A673 (cell line): ENCODE measurements at regions of chr11 and their contacts with region 1.

Region 1: GRCh38 chr11:63445720-63446119 is 45.2 kb downstream of the PLAAT5 start:
- DNase-seq: no peak
- H3K4me3 ChIP-seq: no peak overlapping the region
- H3K27ac ChIP-seq: no peak overlapping the region
- H3K4me1 ChIP-seq: no peaks in the 10 kb centered on the region
- H3K27me3 ChIP-seq: peaks cover 12% of the 10 kb centered on the region
- CTCF ChIP-seq: no peak

Region 2: DNA sequence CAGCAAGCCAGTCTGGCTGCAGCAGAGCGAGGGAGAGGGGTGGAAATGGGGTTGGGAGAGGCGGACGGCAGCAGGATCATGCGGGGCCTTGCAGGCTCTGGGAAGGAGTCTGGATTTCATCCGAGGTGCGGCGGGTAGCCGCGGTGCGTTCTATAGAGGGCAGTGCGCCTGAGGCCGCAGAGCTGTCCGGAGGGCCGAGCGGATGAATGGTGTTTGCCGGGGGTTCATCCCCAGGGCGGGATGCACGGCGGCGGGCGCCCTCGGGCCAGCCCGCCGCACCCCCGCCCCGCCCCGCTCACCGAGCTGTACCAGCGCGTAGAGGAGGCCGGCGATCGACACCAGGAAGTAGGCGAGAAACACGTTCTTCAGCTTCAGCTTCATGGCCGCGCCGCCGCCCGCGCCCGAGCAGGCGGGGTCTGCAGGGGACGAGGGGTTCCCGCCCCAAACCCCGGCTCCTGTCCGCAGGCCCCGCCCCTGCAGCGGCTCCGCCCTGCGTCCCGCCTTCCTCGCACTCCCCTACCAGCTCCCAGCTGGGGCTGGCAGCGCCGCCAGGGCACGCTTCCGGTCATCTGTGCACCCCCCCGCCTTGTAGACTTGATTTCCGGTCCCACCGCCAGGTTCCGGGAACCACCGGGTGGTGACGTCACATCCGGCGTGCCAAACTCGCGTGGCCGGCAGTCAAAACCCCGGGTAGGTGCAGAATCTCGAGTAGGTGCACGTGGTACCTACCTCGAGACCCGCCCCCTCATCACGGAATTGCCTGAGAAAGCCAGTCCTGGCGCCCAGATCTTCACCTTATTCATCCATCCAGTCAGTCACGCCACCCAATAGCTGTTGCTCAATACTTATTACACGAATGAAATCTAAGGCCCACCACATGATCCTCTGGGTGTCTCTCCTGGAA is 823.9 kb before region 1 on chr11 and contains the start of gene B3GAT3:
- CTCF ChIA-PET with region 1: no interaction called
- POLR2A ChIA-PET with region 1: no interaction called
- intact Hi-C with region 1: no loop called
- DNase-seq: peak; percentile 97
- H3K4me3 ChIP-seq: peak within 1 kb of the TSS; percentile 57
- H3K27ac ChIP-seq: peak within 1 kb of the TSS; percentile 86
- H3K4me1 ChIP-seq: peaks cover 12% of the 10 kb centered on the region
- H3K27me3 ChIP-seq: no peaks in the 10 kb centered on the region
- CTCF ChIP-seq: no peak
- total RNA-seq, gene B3GAT3: 64.7 and 68.2 TPM in 2 replicates

Region 3: DNA sequence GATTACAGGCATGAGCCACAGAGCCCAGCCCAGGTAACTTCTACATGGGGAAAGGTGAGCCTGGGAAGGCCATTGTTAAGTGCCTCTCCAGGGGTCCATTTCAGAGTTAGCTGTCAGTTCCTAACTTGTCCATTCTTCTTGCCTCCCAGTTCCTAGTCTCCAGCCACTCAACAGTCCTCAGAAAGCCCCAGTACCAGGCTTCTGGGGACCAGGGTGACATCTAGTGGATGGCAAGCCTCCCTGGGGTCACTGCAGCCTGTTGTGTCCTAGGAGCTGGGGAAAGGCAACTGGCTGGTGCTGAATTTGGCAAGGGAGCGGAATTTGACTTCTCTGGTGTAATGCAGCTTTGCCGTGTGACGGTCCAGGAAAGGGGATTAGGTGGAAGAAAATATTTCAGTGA is 62.3 kb after region 1 on chr11:
- CTCF ChIA-PET with region 1: no interaction called
- POLR2A ChIA-PET with region 1: no interaction called
- intact Hi-C with region 1: loop called (anchors 10 kb)
- DNase-seq: peak; percentile 62
- H3K4me3 ChIP-seq: no peak overlapping the region
- H3K27ac ChIP-seq: no peak overlapping the region
- H3K4me1 ChIP-seq: no peaks in the 10 kb centered on the region
- H3K27me3 ChIP-seq: no peaks in the 10 kb centered on the region
- CTCF ChIP-seq: peak; percentile 58